SK-N-SH (cell line): ENCODE measurements at regions of chr7 and their contacts with region 1.

Region 1: DNA sequence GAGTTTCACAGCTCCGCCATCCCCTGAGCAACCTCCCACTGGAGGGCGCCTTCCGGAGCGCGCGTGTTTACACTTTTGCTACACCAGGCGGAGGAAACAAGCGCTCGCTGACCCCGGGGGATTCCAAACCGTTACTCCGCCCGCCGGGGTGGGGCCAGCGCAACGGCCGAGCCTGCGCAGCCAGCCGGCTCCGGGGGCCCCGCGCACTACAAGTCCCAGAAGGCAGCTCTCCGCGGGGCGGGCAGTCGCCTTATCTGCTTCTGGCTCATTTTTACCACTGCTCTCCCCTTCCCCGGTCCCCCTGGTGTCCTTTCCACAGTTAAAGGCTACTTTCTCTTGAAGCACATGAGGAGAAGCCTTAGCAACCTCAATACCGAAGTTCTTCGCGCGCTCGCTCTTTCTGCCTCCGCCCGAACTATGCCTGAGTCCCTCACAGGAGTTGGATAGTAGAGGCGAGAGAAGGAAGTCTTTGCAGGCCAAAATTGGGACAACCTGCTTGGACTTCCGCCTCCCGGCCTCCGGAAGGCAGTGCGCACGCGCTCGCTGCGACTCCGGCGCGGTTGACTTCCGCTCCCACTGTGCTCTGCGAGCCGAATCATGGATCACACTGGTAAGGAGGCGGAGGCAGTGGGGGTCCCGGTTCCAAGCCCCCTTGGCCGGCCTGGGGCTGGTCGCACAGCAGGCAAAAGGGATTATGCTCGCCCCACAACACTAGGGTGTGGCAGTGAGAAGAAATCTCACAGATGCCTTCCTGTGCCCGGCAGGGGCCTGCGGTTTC is at the start of gene CBLL1:
- DNase-seq: peak; percentile 97
- H3K4me3 ChIP-seq: peak within 1 kb of the TSS; percentile 96 to 100
- H3K27ac ChIP-seq: peak within 1 kb of the TSS; percentile 98 to 100
- H3K4me1 ChIP-seq: peaks cover 7 to 20% of the 10 kb centered on the region in 2 experiments; a peak in 3 of 4 replicates
- H3K27me3 ChIP-seq: no peaks in the 10 kb centered on the region
- CTCF ChIP-seq: peak; percentile 93
- EP300 ChIP-seq: peak in 1 of 2 experiments; percentile 59; a peak in 2 of 4 replicates
- RAD21 ChIP-seq: peak; percentile 69
- polyA plus RNA-seq, gene CBLL1: 26.0 and 28.8 TPM in 2 replicates

Region 2: DNA sequence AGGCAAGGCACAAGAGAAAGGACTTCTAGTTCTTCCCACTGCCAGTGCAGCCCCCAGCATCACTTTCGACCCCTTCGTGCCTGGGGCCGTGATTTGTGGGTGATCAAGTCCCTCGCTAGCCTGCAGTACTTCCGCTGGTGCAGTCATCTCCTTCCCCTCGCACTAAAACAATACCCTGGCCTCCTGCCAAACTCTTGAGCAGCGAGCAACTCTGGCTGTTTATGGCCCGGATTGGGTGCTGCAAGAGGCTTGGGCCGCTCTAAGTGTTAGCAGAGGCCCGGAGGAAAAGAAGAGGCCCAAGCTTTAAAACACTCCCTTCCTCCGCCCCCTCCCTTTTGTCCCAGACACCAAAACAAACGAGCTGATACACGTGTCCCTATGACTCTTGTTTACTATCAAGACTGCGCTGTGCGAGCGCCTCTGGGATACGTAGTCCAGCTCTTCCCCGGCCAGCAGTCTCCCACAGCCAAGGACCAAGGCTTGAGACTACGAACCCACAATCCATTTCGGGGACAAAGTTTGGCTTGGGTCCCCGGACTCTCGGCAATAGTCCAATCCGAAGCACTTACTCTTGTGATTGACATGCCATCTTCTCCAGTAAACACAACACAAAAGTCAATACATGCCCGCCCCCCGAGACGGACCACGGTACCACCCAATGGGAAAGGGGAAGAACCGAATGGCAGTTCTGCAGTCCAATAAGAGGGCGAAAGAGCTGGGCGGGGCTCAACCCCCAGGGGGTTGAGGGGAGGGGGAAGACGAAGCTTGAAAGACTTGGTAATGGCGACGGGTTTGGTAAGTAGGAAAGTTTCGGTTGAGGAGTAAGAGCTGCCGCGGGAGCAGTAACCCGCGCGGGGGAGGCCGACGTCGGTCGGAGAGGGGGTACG is 575.3 kb before region 1 on chr7 and contains the start of gene HBP1:
- CTCF ChIA-PET with region 1: interaction called, 3 read pairs
- POLR2A ChIA-PET with region 1: interaction called, 19 read pairs
- DNase-seq: peak; percentile 95
- H3K4me3 ChIP-seq: peak within 1 kb of the TSS; percentile 87 to 89
- H3K27ac ChIP-seq: peak within 1 kb of the TSS; percentile 97 to 98
- H3K4me1 ChIP-seq: peaks cover 0 to 13% of the 10 kb centered on the region in 2 experiments; a peak in 2 of 4 replicates
- H3K27me3 ChIP-seq: no peaks in the 10 kb centered on the region
- CTCF ChIP-seq: no peak
- EP300 ChIP-seq: no peak
- RAD21 ChIP-seq: no peak
- polyA plus RNA-seq, gene HBP1: 27.2 and 36.8 TPM in 2 replicates

Region 3: GRCh38 chr7:107526672-107527071 is 217.1 kb before region 1 on chr7:
- CTCF ChIA-PET with region 1: no interaction called
- POLR2A ChIA-PET with region 1: no interaction called
- DNase-seq: no peak
- H3K4me3 ChIP-seq: no peak overlapping the region
- H3K27ac ChIP-seq: no peak overlapping the region
- H3K4me1 ChIP-seq: peaks cover 0 to 2% of the 10 kb centered on the region in 2 experiments; a peak in 1 of 4 replicates
- H3K27me3 ChIP-seq: no peaks in the 10 kb centered on the region
- CTCF ChIP-seq: no peak
- EP300 ChIP-seq: no peak
- RAD21 ChIP-seq: no peak

Region 4: DNA sequence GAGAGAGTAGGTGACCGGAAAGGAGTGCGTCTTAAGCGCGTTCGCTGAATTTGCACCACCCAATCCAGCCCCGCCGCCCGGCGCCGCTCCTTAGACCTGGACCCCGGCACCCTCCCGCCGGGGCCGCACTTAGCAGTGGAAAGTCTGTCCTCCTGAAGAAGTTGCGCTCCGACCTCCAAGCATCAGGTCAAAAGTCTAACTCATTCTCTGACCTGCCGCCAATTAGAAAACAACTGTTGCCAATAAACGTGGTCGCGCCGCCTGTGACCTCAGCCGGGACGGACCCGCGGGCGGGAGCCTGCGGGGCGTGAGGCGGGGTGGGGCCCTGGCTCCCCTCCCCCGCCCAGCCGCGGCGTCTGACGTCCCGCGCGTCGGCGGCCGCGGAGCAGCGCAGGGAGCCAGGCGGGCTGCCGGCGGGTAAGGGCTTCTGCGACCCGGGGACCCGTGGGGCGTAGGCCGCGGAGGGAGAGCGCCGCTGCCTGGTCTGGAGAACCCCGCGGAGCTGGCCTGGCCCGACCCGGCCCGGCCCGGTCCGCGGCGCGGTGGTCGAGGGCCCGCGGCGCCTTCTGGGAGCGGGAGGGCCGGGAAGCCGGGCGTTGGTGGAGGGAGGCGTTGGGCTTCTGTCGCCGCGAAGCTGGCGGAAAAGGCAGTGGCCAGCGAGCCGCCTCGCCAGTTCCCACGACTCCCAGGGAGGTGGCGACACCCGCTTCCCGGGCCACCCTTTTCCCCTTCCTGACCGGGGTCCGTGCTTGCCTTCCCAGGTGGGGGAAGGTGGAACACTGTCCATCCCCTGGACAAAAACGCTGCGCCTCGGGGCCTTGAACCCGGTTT is 163.7 kb before region 1 on chr7 and contains the start of gene BCAP29:
- CTCF ChIA-PET with region 1: interaction called, 10 read pairs
- POLR2A ChIA-PET with region 1: interaction called, 6 read pairs
- DNase-seq: peak; percentile 96
- H3K4me3 ChIP-seq: peak within 1 kb of the TSS; percentile 77 to 98
- H3K27ac ChIP-seq: peak within 1 kb of the TSS; percentile 68 to 95
- H3K4me1 ChIP-seq: peaks cover 12 to 23% of the 10 kb centered on the region in 2 experiments; a peak in 2 of 4 replicates
- H3K27me3 ChIP-seq: no peaks in the 10 kb centered on the region
- CTCF ChIP-seq: peak; percentile 41
- EP300 ChIP-seq: peak in 1 of 2 experiments; percentile 33; a peak in 1 of 4 replicates
- RAD21 ChIP-seq: peak; percentile 66
- polyA plus RNA-seq, gene BCAP29: 29.2 and 46.2 TPM in 2 replicates

Region 5: GRCh38 chr7:107754642-107755041 is 10.9 kb after region 1 on chr7:
- CTCF ChIA-PET with region 1: interaction called, 10 read pairs
- POLR2A ChIA-PET with region 1: interaction called, 4 read pairs
- DNase-seq: no peak
- H3K4me3 ChIP-seq: no peak overlapping the region
- H3K27ac ChIP-seq: no peak overlapping the region
- H3K4me1 ChIP-seq: no peaks in the 10 kb centered on the region
- H3K27me3 ChIP-seq: no peaks in the 10 kb centered on the region
- CTCF ChIP-seq: peak; percentile 54
- EP300 ChIP-seq: no peak
- RAD21 ChIP-seq: no peak

Region 6: DNA sequence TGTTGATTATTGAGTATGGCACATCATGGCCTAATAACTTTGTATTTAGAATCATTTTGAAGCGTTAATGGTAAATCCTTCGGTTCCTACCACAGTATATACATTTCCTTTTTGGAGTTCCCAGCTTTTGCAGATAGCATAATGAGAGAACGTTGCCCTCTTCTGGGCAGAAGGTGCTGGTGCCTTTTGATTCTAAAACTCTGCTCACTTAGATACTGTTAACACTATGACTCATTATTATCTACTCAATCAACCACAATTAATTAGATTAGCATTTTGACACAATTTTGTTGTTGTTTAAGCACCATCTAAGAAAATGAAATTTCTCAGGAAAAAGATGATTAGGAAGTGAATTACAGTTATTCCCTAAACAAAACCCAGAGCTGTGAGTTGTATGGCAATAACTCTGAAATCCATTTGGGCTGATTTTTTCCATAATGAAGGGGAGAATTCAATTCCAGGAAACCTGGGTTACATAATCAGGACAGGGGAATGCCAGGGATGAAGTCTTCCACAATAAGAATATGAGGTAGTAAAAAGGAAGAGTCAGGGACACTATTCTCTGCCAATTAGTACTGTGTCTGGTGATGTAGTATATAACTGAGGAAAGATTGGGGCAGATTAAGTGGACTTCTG is 135.8 kb after region 1 on chr7:
- CTCF ChIA-PET with region 1: interaction called, 284 read pairs
- POLR2A ChIA-PET with region 1: interaction called, 15 read pairs
- DNase-seq: peak; percentile 75
- H3K4me3 ChIP-seq: no peak overlapping the region; a peak in 1 of 4 replicates
- H3K27ac ChIP-seq: no peak overlapping the region
- H3K4me1 ChIP-seq: peaks cover 0 to 2% of the 10 kb centered on the region in 2 experiments; a peak in 1 of 4 replicates
- H3K27me3 ChIP-seq: no peaks in the 10 kb centered on the region
- CTCF ChIP-seq: peak; percentile 98
- EP300 ChIP-seq: no peak
- RAD21 ChIP-seq: peak; percentile 90

Region 7: GRCh38 chr7:108045154-108045553 is 301.4 kb after region 1 on chr7:
- CTCF ChIA-PET with region 1: no interaction called
- POLR2A ChIA-PET with region 1: no interaction called
- DNase-seq: no peak
- H3K4me3 ChIP-seq: no peak overlapping the region
- H3K27ac ChIP-seq: peak overlapping the region in 1 of 2 experiments; percentile 12; a peak in 2 of 4 replicates
- H3K4me1 ChIP-seq: 0 out of 4 replicates have a peak, but pooled peaks cover 0 to 7% of the 10 kb centered on the region in 2 experiments
- H3K27me3 ChIP-seq: no peaks in the 10 kb centered on the region
- CTCF ChIP-seq: no peak
- EP300 ChIP-seq: peak in 1 of 2 experiments; percentile 43; a peak in 1 of 4 replicates
- RAD21 ChIP-seq: no peak